Activated T-helper 1 cell treated with anti-CD3 and anti-CD28 coated beads, Interleukin-12 subunit alpha, Interleukin-12 subunit beta, Interleukin-2, Interleukin-4 antibody, amounts not matched to agents 30 ng/mL and 10 ng/mL and 1 ng/mL, durations not matched to agents 14 hours and 24 hours and 36 hours (primary cell): ENCODE measurements at regions of chr17 and their contacts with region 1.

Region 1: GRCh38 chr17:80544655-80545498 is at the start of gene RPTOR:
- DNase-seq: peak; percentile 85
- H3K4me3 Mint-ChIP-seq: peak within 1 kb of the TSS; percentile 93
- H3K27ac Mint-ChIP-seq: peak within 1 kb of the TSS; percentile 94
- H3K4me1 Mint-ChIP-seq: peaks cover 32% of the 10 kb centered on the region
- H3K27me3 Mint-ChIP-seq: peaks cover 5% of the 10 kb centered on the region
- total RNA-seq, gene RPTOR: 63.5 and 66.7 TPM in 2 replicates

Region 2: GRCh38 chr17:80477647-80478478 is 67.0 kb before region 1 on chr17:
- intact Hi-C with region 1: loop called (anchors 5 kb)
- DNase-seq: no peak
- H3K4me3 Mint-ChIP-seq: no peak overlapping the region
- H3K27ac Mint-ChIP-seq: no peak overlapping the region
- H3K4me1 Mint-ChIP-seq: peaks cover 8% of the 10 kb centered on the region
- H3K27me3 Mint-ChIP-seq: peaks cover 50% of the 10 kb centered on the region

Region 3: DNA sequence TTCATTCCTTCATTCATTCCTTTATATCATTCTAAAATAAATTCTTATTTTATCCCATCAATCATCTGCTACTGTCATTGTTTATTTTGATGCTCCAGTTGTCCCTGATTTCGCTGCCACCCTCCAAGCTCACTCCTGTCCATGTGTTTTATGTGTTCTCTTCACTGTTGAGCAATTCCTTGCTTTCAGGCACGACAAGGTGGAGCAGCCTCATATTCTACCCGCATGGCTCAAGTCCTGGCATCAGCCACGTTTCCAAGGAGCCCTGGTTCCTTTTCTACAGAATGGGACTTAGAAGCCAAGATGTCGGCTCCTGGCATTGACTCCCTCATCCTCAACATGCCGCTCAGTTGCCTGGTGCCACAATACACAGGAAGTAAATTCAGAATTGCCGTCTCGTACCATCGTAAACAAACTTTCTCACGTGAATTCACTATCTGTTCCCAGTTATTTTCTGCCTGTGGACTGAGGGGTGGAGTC is 138.8 kb after region 1 on chr17:
- intact Hi-C with region 1: no loop called
- DNase-seq: no peak
- H3K4me3 Mint-ChIP-seq: no peak overlapping the region
- H3K27ac Mint-ChIP-seq: no peak overlapping the region
- H3K4me1 Mint-ChIP-seq: peaks cover 53% of the 10 kb centered on the region
- H3K27me3 Mint-ChIP-seq: no peaks in the 10 kb centered on the region

Region 4: GRCh38 chr17:82134101-82134500 is 1589.2 kb after region 1 on chr17:
- intact Hi-C with region 1: no loop called
- DNase-seq: no peak
- H3K4me3 Mint-ChIP-seq: no peak overlapping the region
- H3K27ac Mint-ChIP-seq: no peak overlapping the region
- H3K4me1 Mint-ChIP-seq: no peaks in the 10 kb centered on the region
- H3K27me3 Mint-ChIP-seq: no peaks in the 10 kb centered on the region